A673 (cell line): ENCODE measurements at regions of chr4 and their contacts with region 1.

Region 1: DNA sequence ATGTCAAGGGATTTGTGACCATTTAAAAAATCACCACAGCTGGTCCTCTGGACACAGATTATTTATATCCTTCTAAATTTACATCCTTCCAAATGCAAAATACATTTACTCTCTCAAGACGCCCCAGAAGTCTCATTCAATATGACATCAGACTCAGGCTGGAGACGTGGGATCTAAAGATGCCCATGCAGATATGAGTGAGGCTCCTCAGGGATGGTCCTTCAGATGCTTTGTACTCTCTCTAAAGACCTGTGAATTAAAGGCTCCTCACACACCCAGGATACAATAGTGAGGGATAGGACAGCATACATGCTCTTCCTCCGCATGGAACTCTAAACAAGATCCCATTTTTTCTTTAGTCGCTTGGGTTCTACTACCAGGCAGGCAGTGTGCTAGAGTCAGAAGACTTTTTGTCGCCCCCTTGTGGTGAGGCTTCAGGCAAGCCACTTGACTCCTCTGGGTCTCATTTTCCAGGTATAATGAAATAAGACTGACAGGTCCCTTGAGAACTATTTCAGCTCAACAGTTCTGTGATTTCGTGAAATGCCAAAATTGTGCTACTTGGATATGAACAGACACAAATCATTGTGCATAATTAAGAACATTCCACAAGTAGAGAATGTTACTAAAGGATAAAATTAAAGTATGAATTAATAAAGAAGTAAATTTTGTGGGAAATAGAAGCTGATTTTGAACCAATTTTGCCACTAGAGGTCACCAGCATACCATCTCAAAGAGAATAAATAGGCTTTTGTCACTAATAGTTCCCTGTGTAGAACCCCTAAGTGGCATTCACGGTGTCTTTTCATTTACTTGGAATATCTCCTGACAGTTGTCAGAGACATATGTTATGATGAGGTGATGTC is 13.7 kb upstream of the SCOC start:
- DNase-seq: peak; percentile 92
- H3K4me3 ChIP-seq: no peak overlapping the region
- H3K27ac ChIP-seq: no peak overlapping the region
- H3K4me1 ChIP-seq: peaks cover 12% of the 10 kb centered on the region
- H3K27me3 ChIP-seq: peaks cover 20% of the 10 kb centered on the region
- CTCF ChIP-seq: peak; percentile 92

Region 2: GRCh38 chr4:139943277-139943676 is 416.5 kb before region 1 on chr4:
- CTCF ChIA-PET with region 1: no interaction called
- POLR2A ChIA-PET with region 1: no interaction called
- intact Hi-C with region 1: no loop called
- DNase-seq: no peak
- H3K4me3 ChIP-seq: no peak overlapping the region
- H3K27ac ChIP-seq: no peak overlapping the region
- H3K4me1 ChIP-seq: peaks cover 5% of the 10 kb centered on the region
- H3K27me3 ChIP-seq: no peaks in the 10 kb centered on the region
- CTCF ChIP-seq: no peak

Region 3: DNA sequence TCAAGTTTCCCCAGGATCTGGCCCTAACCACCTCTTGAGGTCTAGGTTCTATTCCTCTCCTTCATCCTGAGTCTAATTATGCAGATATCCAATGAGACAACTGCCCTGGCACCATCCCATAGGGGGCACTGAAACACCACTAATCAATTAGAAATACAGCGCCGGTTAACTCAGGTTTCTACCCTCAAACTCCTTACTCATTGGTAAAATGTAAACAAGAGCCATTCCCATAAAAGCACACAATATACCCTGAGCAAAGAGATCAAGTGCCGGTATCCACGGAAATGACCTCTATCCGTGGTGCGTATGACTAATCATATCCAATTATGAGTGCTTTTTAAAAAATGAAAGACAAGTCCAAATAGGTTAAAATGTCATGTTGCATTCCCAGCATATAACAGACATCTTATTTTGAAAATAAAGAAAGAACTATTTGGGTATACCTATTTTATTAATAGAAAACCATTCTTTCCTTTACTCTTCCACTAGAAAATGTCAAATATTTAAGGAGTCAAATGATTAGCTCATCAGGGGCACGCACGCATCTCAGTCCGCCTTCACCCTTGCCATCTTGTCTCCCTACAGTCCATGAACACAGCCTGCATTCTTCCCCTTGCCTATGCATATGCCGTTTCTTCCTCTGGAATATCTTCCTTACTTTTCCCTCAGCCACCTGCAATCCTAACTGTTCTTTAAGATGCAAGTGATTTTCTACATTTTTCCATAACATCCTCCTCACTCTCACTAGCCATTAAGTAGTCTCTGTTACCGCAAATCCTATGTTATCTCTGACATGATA is 346.9 kb before region 1 on chr4:
- CTCF ChIA-PET with region 1: interaction called, 8 read pairs
- POLR2A ChIA-PET with region 1: no interaction called
- intact Hi-C with region 1: loop called (anchors 2 kb)
- DNase-seq: peak; percentile 70
- H3K4me3 ChIP-seq: no peak overlapping the region
- H3K27ac ChIP-seq: no peak overlapping the region
- H3K4me1 ChIP-seq: no peaks in the 10 kb centered on the region
- H3K27me3 ChIP-seq: no peaks in the 10 kb centered on the region
- CTCF ChIP-seq: peak; percentile 77

Region 4: DNA sequence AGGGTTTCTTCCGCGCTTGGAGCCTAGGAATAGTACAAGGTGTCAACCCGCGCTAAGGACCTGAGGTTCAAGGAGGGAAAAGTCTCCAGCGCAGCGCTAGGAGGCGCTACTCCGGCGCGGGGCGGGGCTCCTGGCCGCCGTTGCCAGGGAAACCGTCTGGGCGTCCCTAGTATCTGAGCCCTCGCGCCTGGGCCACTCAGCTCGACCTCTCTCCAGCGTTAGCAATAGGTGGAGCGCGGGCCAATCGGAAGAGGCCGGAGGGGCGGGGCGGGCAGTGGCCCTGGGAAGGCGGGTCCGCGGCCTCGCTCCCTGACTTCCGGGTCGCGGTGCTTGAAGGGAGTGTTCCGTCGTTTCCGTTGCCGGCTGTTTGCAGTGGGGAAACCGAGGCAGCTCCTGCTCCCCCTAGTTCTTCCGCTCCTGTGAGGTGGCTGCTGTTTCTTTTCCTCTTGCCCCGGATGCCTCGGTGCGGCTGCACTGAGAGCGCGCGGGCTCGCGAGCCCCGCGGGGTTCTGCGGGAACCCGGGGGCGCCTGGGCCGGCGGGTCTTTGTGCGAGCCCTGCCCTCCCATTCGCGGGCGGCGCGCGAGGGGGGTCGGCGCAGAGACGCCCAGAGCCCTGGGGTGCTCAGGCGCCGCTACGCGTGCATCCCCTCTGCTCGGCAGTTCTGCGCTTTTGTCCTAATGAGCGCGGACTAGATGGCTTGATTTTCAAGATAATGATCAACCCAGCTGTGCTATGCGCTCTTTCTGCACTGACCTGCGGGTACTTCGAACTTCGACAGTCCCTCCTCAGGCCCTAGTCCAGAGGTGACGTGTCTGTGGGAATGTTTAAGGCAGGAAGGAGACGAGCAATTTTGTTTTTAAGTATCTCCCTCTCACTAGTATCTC is 164.3 kb after region 1 on chr4 and contains the start of gene ELMOD2:
- CTCF ChIA-PET with region 1: no interaction called
- POLR2A ChIA-PET with region 1: no interaction called
- intact Hi-C with region 1: loop called (anchors 10 kb)
- DNase-seq: peak; percentile 99
- H3K4me3 ChIP-seq: peak within 1 kb of the TSS; percentile 82
- H3K27ac ChIP-seq: peak within 1 kb of the TSS; percentile 84
- H3K4me1 ChIP-seq: peaks cover 4% of the 10 kb centered on the region
- H3K27me3 ChIP-seq: no peaks in the 10 kb centered on the region
- CTCF ChIP-seq: peak; percentile 99
- total RNA-seq, gene ELMOD2: 37.2 and 38.1 TPM in 2 replicates

Region 5: DNA sequence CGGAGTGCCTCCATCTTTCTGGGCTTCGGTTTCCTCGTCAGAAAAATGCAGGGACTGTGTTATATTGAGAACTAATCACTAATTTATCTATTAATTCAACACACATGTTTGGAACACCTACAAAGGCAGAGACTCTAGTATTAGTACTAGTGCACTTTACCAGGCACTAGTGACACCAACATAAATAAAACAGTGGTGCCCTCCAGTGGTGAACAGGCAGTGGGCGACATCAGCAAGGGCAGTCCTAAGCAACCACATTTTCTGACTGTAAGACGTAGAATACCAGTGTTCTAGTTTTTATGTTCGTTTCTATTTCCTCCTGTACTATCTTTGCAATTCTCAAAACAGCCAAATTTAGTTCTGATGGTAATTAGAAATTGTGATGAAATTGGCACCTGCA is 278.0 kb after region 1 on chr4:
- CTCF ChIA-PET with region 1: no interaction called
- POLR2A ChIA-PET with region 1: no interaction called
- intact Hi-C with region 1: loop called (anchors 5 kb)
- DNase-seq: peak; percentile 59
- H3K4me3 ChIP-seq: no peak overlapping the region
- H3K27ac ChIP-seq: no peak overlapping the region
- H3K4me1 ChIP-seq: no peaks in the 10 kb centered on the region
- H3K27me3 ChIP-seq: no peaks in the 10 kb centered on the region
- CTCF ChIP-seq: peak; percentile 77

Region 6: GRCh38 chr4:141133146-141133998 is 773.6 kb after region 1 on chr4 and contains the start of gene RNF150:
- CTCF ChIA-PET with region 1: no interaction called
- POLR2A ChIA-PET with region 1: no interaction called
- intact Hi-C with region 1: loop called (anchors 1 kb)
- DNase-seq: peak; percentile 88
- H3K4me3 ChIP-seq: peak within 1 kb of the TSS; percentile 77
- H3K27ac ChIP-seq: no peak within 1 kb of the TSS
- H3K4me1 ChIP-seq: no peaks in the 10 kb centered on the region
- H3K27me3 ChIP-seq: peaks cover 47% of the 10 kb centered on the region
- CTCF ChIP-seq: peak; percentile 80
- total RNA-seq, gene RNF150: 2.7 and 3.8 TPM in 2 replicates